CD4-positive, alpha-beta memory T cell (primary cell): ENCODE measurements at regions of chr6 and their contacts with region 1.

Region 1: GRCh38 chr6:144334131-144334708 is 49.1 kb downstream of the UTRN start:
- DNase-seq: peak; percentile 75 to 88 (median 78)
- H3K4me3 ChIP-seq: peak overlapping the region in 1 of 2 donors; percentile 58
- H3K4me3 Mint-ChIP-seq: peak overlapping the region; percentile 73 to 90 (median 85)
- H3K27ac ChIP-seq: peak overlapping the region; percentile 64
- H3K27ac Mint-ChIP-seq: peak overlapping the region; percentile 86 to 97 (median 96)
- H3K4me1 ChIP-seq: peaks cover 38% of the 10 kb centered on the region
- H3K4me1 Mint-ChIP-seq: peaks cover 44 to 62% (median 53%) of the 10 kb centered on the region in 4 donors
- H3K27me3 ChIP-seq: no peaks in the 10 kb centered on the region
- H3K27me3 Mint-ChIP-seq: no peaks in the 10 kb centered on the region

Region 2: GRCh38 chr6:144262470-144263369 is 71.5 kb before region 1 on chr6:
- CTCF ChIA-PET with region 1: interaction called, 5 read pairs
- POLR2A ChIA-PET with region 1: no interaction called
- intact Hi-C with region 1: loop called (anchors 2 kb)
- DNase-seq: peak in 3 of 5 donors; percentile 18 to 28 (median 26)
- H3K4me3 ChIP-seq: no peak overlapping the region
- H3K4me3 Mint-ChIP-seq: no peak overlapping the region
- H3K27ac ChIP-seq: no peak overlapping the region
- H3K27ac Mint-ChIP-seq: no peak overlapping the region
- H3K4me1 ChIP-seq: no peaks in the 10 kb centered on the region
- H3K4me1 Mint-ChIP-seq: peaks cover 0 to 2% (median 0%) of the 10 kb centered on the region in 4 donors
- H3K27me3 ChIP-seq: no peaks in the 10 kb centered on the region
- H3K27me3 Mint-ChIP-seq: peaks cover 0 to 2% of the 10 kb centered on the region in 2 donors